ENCODE measurements at regions of chr3 and their contacts with region 1.

Region 1: DNA sequence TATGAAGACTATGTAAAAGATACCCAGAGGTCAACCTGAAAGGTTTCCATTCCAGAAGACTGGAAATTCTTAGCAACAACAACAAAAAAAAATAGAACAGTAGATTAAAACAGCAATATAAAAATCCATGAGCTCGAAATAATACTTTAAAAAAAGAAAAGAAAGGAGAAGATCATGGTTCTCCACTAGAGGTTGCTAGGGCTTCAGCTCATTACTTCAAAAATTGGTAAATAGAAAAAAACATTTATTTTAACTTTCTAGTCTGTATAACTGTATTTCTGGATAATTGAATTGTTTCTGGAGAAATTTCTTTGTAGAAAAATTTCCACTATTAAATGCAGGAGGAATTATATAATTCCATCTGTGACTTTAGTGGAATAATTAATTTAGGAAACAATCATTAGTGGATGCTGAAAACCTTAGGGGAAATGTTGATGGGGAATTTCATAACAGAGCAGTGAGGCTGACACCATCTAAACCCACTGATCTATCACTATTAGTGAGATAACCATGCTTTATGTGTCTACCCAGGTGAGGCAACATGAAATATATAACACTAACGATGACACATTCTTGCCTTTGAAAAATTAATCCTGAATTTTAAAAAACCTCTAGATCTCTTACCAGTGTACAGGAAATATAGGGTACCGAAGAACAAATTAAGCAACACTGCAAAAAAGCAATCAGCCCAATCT is 62.5 kb upstream of the SNRK start:
- DNase-seq: peak in 1 of 2 donors; percentile 56
- ATAC-seq: peak; percentile 52 to 75 (median 67)
- H3K4me3 ChIP-seq: no peak overlapping the region
- H3K4me3 Mint-ChIP-seq: no peak overlapping the region
- H3K27ac ChIP-seq: no peak overlapping the region
- H3K27ac Mint-ChIP-seq: peak overlapping the region; percentile 28 to 32
- H3K4me1 ChIP-seq: no peaks in the 10 kb centered on the region
- H3K4me1 Mint-ChIP-seq: peaks cover 15 to 31% of the 10 kb centered on the region in 2 donors
- H3K27me3 ChIP-seq: no peaks in the 10 kb centered on the region
- H3K27me3 Mint-ChIP-seq: no peaks in the 10 kb centered on the region
- CTCF ChIP-seq: peak; percentile 69

Region 2: GRCh38 chr3:43378066-43378935 is 154.5 kb after region 1 on chr3:
- intact Hi-C with region 1: loop called (anchors 1 kb)
- DNase-seq: peak; percentile 52 to 88
- ATAC-seq: peak; percentile 79 to 91 (median 90)
- H3K4me3 ChIP-seq: no peak overlapping the region
- H3K4me3 Mint-ChIP-seq: no peak overlapping the region
- H3K27ac ChIP-seq: no peak overlapping the region
- H3K27ac Mint-ChIP-seq: peak overlapping the region; percentile 15 to 66
- H3K4me1 ChIP-seq: peaks cover 13% of the 10 kb centered on the region
- H3K4me1 Mint-ChIP-seq: peaks cover 18 to 23% of the 10 kb centered on the region in 2 donors
- H3K27me3 ChIP-seq: no peaks in the 10 kb centered on the region
- H3K27me3 Mint-ChIP-seq: no peaks in the 10 kb centered on the region
- CTCF ChIP-seq: peak; percentile 86

Region 3: GRCh38 chr3:43503067-43503728 is 279.4 kb after region 1 on chr3:
- intact Hi-C with region 1: loop called (anchors 1 kb)
- DNase-seq: peak in 1 of 2 donors; percentile 70
- ATAC-seq: peak; percentile 60 to 81 (median 77)
- H3K4me3 ChIP-seq: no peak overlapping the region
- H3K4me3 Mint-ChIP-seq: peak overlapping the region; percentile 10
- H3K27ac ChIP-seq: no peak overlapping the region
- H3K27ac Mint-ChIP-seq: peak overlapping the region; percentile 62 to 67
- H3K4me1 ChIP-seq: peaks cover 13% of the 10 kb centered on the region
- H3K4me1 Mint-ChIP-seq: peaks cover 47 to 48% of the 10 kb centered on the region in 2 donors
- H3K27me3 ChIP-seq: no peaks in the 10 kb centered on the region
- H3K27me3 Mint-ChIP-seq: no peaks in the 10 kb centered on the region
- CTCF ChIP-seq: peak; percentile 85